A549 (cell line): ENCODE measurements at regions of chr11 and their contacts with region 1.

Region 1: DNA sequence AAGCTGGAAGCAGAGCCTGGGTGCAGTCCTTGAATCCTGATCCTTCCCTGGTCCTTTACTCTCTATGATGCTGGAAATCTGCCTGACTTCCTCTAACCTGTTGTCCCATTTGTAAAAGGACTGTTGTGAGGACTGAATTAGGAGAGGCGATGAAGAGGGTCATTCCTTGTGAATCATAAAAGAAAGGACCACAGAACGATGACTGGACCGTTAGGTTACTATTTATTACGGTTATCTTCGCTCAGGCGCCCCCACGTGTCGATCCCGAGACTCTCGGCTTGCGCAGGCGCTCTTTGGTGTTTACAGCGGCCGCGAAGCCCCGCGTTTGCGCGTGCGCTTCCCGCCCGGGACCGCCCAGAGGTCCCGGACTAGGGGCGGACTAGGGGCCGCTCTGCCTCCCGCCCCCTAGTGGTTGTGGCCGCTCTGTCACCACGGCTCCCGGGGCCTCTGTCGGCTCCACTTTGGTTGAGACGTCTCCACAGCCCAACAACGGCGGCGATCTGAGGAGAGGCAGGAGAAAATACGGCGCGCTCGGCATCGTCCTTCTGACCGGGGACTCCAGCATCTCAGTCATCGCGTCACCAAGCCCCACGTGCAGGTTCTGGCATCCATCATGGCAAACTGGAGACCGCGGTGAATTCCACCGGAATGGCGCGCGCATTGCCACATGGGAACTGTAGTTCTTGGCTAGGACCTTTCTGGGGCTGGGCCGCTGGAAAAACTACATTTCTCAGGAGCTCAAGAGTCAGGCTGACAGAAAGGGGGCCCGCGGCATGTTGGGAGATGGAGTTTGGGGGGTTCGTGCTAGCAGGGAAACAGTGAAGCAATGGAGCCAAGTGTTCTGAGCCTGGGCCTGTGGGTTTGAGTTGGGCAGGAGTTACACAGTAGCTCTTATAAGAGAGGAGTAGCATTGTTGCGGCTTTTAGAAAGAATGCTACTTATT is at the start of gene STARD10:
- DNase-seq: peak; percentile 94
- ATAC-seq: peak; percentile 93 to 97
- H3K4me3 ChIP-seq: peak within 1 kb of the TSS; percentile 57
- H3K27ac ChIP-seq: peak within 1 kb of the TSS; percentile 93 to 95
- H3K4me1 ChIP-seq: peaks cover 14% of the 10 kb centered on the region
- CTCF ChIP-seq: peak; percentile 95
- EP300 ChIP-seq: no peak
- POLR2A ChIP-seq: peak; percentile 48
- RAD21 ChIP-seq: peak; percentile 51 to 74
- polyA plus RNA-seq, gene STARD10: 21.2 and 25.0 TPM in 2 replicates

Region 2: GRCh38 chr11:72675221-72675620 is 118.5 kb before region 1 on chr11:
- CTCF ChIA-PET with region 1: no interaction called
- POLR2A ChIA-PET with region 1: no interaction called
- DNase-seq: no peak
- ATAC-seq: no peak
- H3K4me3 ChIP-seq: no peak overlapping the region
- H3K27ac ChIP-seq: no peak overlapping the region
- H3K4me1 ChIP-seq: no peaks in the 10 kb centered on the region
- CTCF ChIP-seq: no peak
- EP300 ChIP-seq: no peak
- POLR2A ChIP-seq: no peak
- RAD21 ChIP-seq: no peak

Region 3: DNA sequence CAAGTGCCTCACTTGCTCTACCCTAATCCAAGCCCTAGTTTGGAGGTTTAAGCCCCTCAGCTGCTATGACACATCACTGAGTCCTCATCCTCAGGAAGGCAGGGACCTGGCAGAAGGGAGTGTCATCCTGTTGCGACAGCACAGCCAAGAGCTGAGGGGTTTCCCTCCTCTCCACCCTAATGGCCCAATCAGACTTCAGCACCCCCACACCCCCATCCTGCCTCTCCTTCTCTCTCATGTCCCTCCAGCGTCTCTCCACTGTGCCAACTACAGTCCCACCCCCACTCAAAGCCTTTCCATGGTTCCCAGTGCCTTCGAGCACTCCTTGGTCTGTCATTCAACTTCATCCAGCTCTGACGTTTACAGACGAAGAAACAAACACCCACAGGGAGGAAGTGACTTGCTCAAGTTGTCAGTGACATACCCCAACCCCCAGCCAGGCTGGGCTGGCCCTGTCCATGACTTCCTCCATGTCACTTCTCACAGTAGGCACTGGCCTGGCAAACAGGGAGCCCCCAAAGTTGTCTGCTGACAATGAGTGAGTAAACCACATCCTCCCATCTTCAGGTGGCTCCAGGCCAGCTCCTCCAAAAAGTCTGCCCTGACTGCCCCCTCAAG is 57.1 kb before region 1 on chr11:
- CTCF ChIA-PET with region 1: interaction called, 37 read pairs
- POLR2A ChIA-PET with region 1: no interaction called
- DNase-seq: peak; percentile 56 to 67
- ATAC-seq: peak; percentile 60 to 71
- H3K4me3 ChIP-seq: no peak overlapping the region
- H3K27ac ChIP-seq: peak overlapping the region; percentile 44 to 76
- H3K4me1 ChIP-seq: peaks cover 37% of the 10 kb centered on the region
- CTCF ChIP-seq: no peak
- EP300 ChIP-seq: no peak
- POLR2A ChIP-seq: no peak
- RAD21 ChIP-seq: no peak

Region 4: GRCh38 chr11:72752088-72752914 is 41.4 kb before region 1 on chr11 and contains the start of gene ARAP1:
- CTCF ChIA-PET with region 1: interaction called, 14 read pairs
- POLR2A ChIA-PET with region 1: no interaction called
- DNase-seq: peak; percentile 70 to 91
- ATAC-seq: peak; percentile 88 to 91
- H3K4me3 ChIP-seq: peak within 1 kb of the TSS; percentile 97
- H3K27ac ChIP-seq: peak within 1 kb of the TSS; percentile 91 to 93
- H3K4me1 ChIP-seq: peaks cover 19% of the 10 kb centered on the region
- CTCF ChIP-seq: no peak
- EP300 ChIP-seq: no peak
- POLR2A ChIP-seq: no peak; the same call in none of the 2 replicates
- RAD21 ChIP-seq: no peak
- polyA plus RNA-seq, gene ARAP1: 28.9 and 29.5 TPM in 2 replicates

Region 5: GRCh38 chr11:72772978-72773690 is 20.6 kb before region 1 on chr11:
- CTCF ChIA-PET with region 1: interaction called, 44 read pairs
- POLR2A ChIA-PET with region 1: no interaction called
- DNase-seq: no peak
- ATAC-seq: peak; percentile 12 to 28; a peak in 2 of 6 replicates
- H3K4me3 ChIP-seq: no peak overlapping the region
- H3K27ac ChIP-seq: no peak overlapping the region
- H3K4me1 ChIP-seq: peaks cover 11% of the 10 kb centered on the region
- CTCF ChIP-seq: no peak
- EP300 ChIP-seq: no peak
- POLR2A ChIP-seq: no peak
- RAD21 ChIP-seq: no peak

Region 6: GRCh38 chr11:72781313-72782050 is 12.2 kb before region 1 on chr11:
- CTCF ChIA-PET with region 1: interaction called, 44 read pairs
- POLR2A ChIA-PET with region 1: interaction called, 4 read pairs
- DNase-seq: peak in 1 of 2 experiments; percentile 77
- ATAC-seq: peak; percentile 60 to 63; a peak in 5 of 6 replicates
- H3K4me3 ChIP-seq: peak overlapping the region; percentile 59
- H3K27ac ChIP-seq: peak overlapping the region; percentile 61 to 94
- H3K4me1 ChIP-seq: peaks cover 36% of the 10 kb centered on the region
- CTCF ChIP-seq: no peak
- EP300 ChIP-seq: no peak
- POLR2A ChIP-seq: no peak
- RAD21 ChIP-seq: no peak

Region 7: GRCh38 chr11:72814286-72815109 is 20.8 kb after region 1 on chr11 and contains the start of gene ATG16L2:
- CTCF ChIA-PET with region 1: interaction called, 42 read pairs
- POLR2A ChIA-PET with region 1: interaction called, 10 read pairs
- DNase-seq: peak; percentile 90 to 93
- ATAC-seq: peak; percentile 72 to 85
- H3K4me3 ChIP-seq: peak within 1 kb of the TSS; percentile 58
- H3K27ac ChIP-seq: peak within 1 kb of the TSS; percentile 78 to 95
- H3K4me1 ChIP-seq: peaks cover 22% of the 10 kb centered on the region
- CTCF ChIP-seq: peak; percentile 12; the same call in 1 of the 3 replicates
- EP300 ChIP-seq: peak in 1 of 2 experiments; percentile 25; a peak in 1 of 5 replicates
- POLR2A ChIP-seq: peak; percentile 93
- RAD21 ChIP-seq: peak in 1 of 2 experiments; percentile 33; a peak in 3 of 5 replicates
- polyA plus RNA-seq, gene ATG16L2: 6.1 and 6.2 TPM in 2 replicates